ENCODE measurements at regions of chr10 and their contacts with region 1.

Region 1: DNA sequence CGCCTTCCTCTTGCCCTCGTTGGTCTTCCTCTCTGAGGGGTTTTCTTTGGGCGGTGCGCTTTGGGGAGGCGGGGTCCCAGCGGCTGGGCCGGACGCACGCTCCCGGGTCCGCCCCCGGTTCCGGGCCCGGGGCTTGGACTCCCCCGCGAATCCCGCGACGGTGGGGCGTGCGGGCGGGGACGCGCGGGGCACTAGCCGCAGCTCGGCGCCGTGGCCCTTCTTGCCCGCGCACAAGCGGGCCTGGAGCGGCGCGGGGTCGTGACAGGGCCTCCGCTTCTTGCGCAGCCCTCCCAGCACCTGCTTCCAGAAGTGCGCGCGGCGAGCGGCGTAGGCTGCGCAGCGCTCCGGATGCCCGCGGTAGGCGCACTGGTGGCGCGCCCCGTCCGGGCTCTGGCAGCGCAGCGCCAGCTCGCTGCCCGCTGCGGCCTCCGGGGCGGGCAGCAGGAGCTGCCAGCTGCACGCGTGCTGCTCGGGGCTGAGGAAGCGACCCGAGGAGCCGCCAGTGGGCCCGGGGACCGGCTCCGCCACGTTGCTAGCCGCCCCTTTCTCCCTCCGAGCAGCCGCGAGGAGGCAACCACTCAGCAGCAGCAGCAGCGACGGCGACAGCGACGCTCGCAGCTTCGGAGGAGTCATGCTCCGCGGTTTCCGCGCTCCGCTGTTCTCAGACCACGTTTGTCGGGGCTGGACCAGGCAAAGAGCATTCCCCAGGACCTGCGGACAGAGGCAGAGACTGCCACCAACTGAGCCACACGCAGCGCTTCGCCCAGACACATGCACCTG is 759 bp downstream of the FGFBP3 start:
- DNase-seq: peak; percentile 65
- H3K4me3 Mint-ChIP-seq: peak overlapping the region; percentile 87
- H3K27ac Mint-ChIP-seq: peak overlapping the region; percentile 82
- H3K4me1 Mint-ChIP-seq: peaks cover 29% of the 10 kb centered on the region
- H3K27me3 Mint-ChIP-seq: peaks cover 14% of the 10 kb centered on the region

Region 2: GRCh38 chr10:91006001-91006751 is 902.4 kb before region 1 on chr10:
- intact Hi-C with region 1: loop called (anchors 10 kb)
- DNase-seq: peak; percentile 41
- H3K4me3 Mint-ChIP-seq: peak overlapping the region; percentile 8
- H3K27ac Mint-ChIP-seq: peak overlapping the region; percentile 58
- H3K4me1 Mint-ChIP-seq: peaks cover 27% of the 10 kb centered on the region
- H3K27me3 Mint-ChIP-seq: peaks cover 28% of the 10 kb centered on the region

Region 3: GRCh38 chr10:91389636-91390512 is 518.7 kb before region 1 on chr10:
- intact Hi-C with region 1: loop called (anchors 1 kb)
- DNase-seq: no peak
- H3K4me3 Mint-ChIP-seq: no peak overlapping the region
- H3K27ac Mint-ChIP-seq: no peak overlapping the region
- H3K4me1 Mint-ChIP-seq: peaks cover 7% of the 10 kb centered on the region
- H3K27me3 Mint-ChIP-seq: peaks cover 16% of the 10 kb centered on the region

Region 4: GRCh38 chr10:91758303-91759146 is 150.0 kb before region 1 on chr10:
- intact Hi-C with region 1: loop called (anchors 1 kb)
- DNase-seq: no peak
- H3K4me3 Mint-ChIP-seq: no peak overlapping the region
- H3K27ac Mint-ChIP-seq: no peak overlapping the region
- H3K4me1 Mint-ChIP-seq: no peaks in the 10 kb centered on the region
- H3K27me3 Mint-ChIP-seq: peaks cover 37% of the 10 kb centered on the region

Region 5: GRCh38 chr10:91887272-91888076 is 21.1 kb before region 1 on chr10:
- intact Hi-C with region 1: loop called (anchors 2 kb)
- DNase-seq: no peak
- H3K4me3 Mint-ChIP-seq: peak overlapping the region; percentile 86
- H3K27ac Mint-ChIP-seq: peak overlapping the region; percentile 22
- H3K4me1 Mint-ChIP-seq: peaks cover 9% of the 10 kb centered on the region
- H3K27me3 Mint-ChIP-seq: peaks cover 46% of the 10 kb centered on the region

Region 6: DNA sequence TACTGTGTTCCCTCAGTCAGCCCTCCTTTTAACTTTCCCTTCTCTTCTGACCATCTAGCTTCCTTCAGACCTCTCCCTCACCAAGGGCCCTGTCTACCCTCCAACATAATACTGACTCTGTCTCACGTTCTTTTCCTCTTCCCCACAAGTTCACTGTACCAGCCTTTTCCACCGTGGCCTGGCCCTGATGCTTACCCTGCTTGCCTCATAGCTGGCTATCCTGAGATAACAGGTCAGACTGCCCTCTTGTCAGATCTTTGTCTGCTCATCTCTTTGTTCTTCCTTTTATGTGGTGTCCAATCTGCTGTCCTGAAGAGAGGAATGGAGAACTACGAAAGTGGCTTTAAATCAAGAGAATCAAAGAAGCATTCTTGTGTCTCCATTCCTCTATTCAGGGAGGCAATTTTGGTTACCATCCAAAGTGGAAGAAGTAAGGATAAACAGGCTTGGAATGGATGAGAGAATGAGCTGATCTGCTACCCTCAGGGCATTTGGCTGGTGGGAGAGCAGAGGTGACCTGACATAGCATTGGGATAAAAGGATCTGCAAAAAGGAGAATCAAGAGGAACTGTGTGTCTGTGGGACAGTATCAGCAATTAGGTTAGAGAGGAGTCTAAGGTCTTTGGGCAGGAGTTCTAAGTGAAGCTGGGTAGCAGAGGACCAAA is 23.1 kb after region 1 on chr10:
- intact Hi-C with region 1: no loop called
- DNase-seq: no peak
- H3K4me3 Mint-ChIP-seq: no peak overlapping the region
- H3K27ac Mint-ChIP-seq: no peak overlapping the region
- H3K4me1 Mint-ChIP-seq: peaks cover 29% of the 10 kb centered on the region
- H3K27me3 Mint-ChIP-seq: no peaks in the 10 kb centered on the region

Region 7: DNA sequence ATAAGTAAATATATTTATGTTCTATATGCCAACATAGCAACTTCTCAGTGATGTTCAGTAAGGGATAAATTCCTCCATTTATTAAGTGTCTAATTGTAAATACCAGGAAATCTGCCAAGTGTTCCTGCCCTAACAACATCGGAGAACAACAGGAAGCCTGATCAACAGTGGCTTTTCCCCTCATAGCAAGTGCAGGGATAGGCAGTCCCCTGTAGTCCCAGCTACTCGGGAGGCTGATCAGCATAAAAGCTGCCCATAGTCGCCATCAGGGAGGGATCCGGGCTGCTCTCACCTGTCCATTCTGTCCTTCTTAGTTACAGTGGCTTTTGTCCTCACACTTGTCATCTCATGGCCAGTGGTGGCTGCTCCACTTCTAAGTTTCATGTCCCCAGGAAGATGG is 524.1 kb after region 1 on chr10:
- intact Hi-C with region 1: loop called (anchors 2 kb)
- DNase-seq: no peak
- H3K4me3 Mint-ChIP-seq: no peak overlapping the region
- H3K27ac Mint-ChIP-seq: no peak overlapping the region
- H3K4me1 Mint-ChIP-seq: no peaks in the 10 kb centered on the region
- H3K27me3 Mint-ChIP-seq: peaks cover 2% of the 10 kb centered on the region

Measured in activated T-helper 1 cell treated with anti-CD3 and anti-CD28 coated beads, Interleukin-12 subunit alpha, Interleukin-12 subunit beta, Interleukin-2, Interleukin-4 antibody, amounts not matched to agents 30 ng/mL and 10 ng/mL and 1 ng/mL, durations not matched to agents 14 hours and 24 hours and 36 hours (primary cell).